Transverse colon (tissue), 4 donors: ENCODE measurements at regions of chr18 and their contacts with region 1.

Region 1: GRCh38 chr18:75500545-75500944 is 73.0 kb upstream of the SMIM21 start:
- DNase-seq: no peak
- H3K4me3 ChIP-seq: no peak overlapping the region
- H3K27ac ChIP-seq: no peak overlapping the region
- H3K4me1 ChIP-seq: no peaks in the 10 kb centered on the region
- H3K27me3 ChIP-seq: no peaks in the 10 kb centered on the region
- CTCF ChIP-seq: no peak
- EP300 ChIP-seq: no peak
- POLR2A ChIP-seq: no peak

Region 2: DNA sequence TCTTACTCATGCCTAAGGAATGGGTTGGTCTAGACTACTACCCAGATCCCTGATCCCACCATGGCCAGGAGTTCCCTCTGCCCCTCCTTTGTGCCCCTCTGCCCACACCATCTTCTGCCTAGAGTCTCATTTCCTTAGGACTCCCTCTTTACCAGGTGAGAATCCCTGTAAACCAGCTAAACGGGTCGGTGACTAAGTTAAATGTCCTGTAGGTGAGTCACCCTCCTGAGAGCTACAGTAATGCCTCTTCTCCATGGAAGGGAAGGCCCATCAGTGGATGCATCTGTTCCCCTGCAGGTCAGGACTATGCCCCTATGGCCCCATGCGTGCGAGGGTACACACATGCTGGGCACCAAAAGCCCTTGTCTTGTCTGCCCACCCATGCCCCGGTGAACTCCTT is 317.0 kb before region 1 on chr18:
- in situ Hi-C with region 1: no loop called
- intact Hi-C with region 1: no loop called
- DNase-seq: no peak
- H3K4me3 ChIP-seq: no peak overlapping the region
- H3K27ac ChIP-seq: no peak overlapping the region
- H3K4me1 ChIP-seq: no peaks in the 10 kb centered on the region
- H3K27me3 ChIP-seq: no peaks in the 10 kb centered on the region
- CTCF ChIP-seq: no peak
- EP300 ChIP-seq: no peak
- POLR2A ChIP-seq: no peak

Region 3: GRCh38 chr18:75429975-75430374 is 70.6 kb before region 1 on chr18:
- in situ Hi-C with region 1: no loop called
- intact Hi-C with region 1: no loop called
- DNase-seq: no peak
- H3K4me3 ChIP-seq: no peak overlapping the region
- H3K27ac ChIP-seq: no peak overlapping the region
- H3K4me1 ChIP-seq: no peaks in the 10 kb centered on the region
- H3K27me3 ChIP-seq: peaks cover 6% of the 10 kb centered on the region
- CTCF ChIP-seq: no peak
- EP300 ChIP-seq: no peak
- POLR2A ChIP-seq: no peak

Region 4: DNA sequence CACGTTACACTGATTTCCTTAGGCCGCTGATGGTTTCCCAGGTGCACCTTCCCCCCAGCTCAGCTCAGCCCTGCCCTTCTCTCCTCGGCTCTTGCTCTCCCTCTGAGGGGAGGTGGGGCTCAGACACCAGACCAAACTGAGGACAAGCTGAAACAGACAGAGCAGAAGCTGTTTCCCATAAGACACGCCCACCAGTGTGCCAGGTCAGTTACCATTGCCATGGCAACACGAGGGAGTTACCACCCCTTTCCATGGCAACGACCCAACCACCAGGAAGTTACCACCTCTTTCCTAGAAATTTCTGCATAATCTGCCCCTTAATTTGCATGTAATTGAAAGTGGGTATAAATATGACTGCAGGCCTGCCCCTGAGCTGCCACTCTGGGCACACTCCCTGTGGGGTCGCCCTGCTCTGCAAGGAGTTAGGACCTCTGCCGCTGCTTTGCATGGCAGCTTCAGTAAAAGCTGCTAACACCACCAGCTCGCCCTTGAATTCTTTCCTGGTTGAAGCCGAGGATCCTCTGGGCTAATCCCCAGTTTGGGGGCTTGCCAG is 47.9 kb after region 1 on chr18:
- in situ Hi-C with region 1: no loop called
- intact Hi-C with region 1: loop called (anchors 1 kb)
- DNase-seq: no peak
- H3K4me3 ChIP-seq: no peak overlapping the region
- H3K27ac ChIP-seq: no peak overlapping the region
- H3K4me1 ChIP-seq: no peaks in the 10 kb centered on the region
- H3K27me3 ChIP-seq: no peaks in the 10 kb centered on the region
- CTCF ChIP-seq: no peak
- EP300 ChIP-seq: no peak
- POLR2A ChIP-seq: no peak